ENCODE measurements at regions of chr3 and their contacts with region 1.

Region 1: GRCh38 chr3:149352556-149352955 is 19.1 kb upstream of the TM4SF18 start:
- DNase-seq: no peak
- ATAC-seq: peak; percentile 99
- H3K4me3 ChIP-seq: no peak overlapping the region
- H3K27ac ChIP-seq: no peak overlapping the region
- H3K4me1 ChIP-seq: no peaks in the 10 kb centered on the region
- H3K27me3 ChIP-seq: peaks cover 5 to 6% of the 10 kb centered on the region in 2 experiments
- CTCF ChIP-seq: peak; percentile 68 to 81 (median 80)
- EP300 ChIP-seq: no peak
- POLR2A ChIP-seq: no peak
- RAD21 ChIP-seq: peak; percentile 76

Region 2: GRCh38 chr3:149363053-149363452 is 10.5 kb after region 1 on chr3:
- CTCF ChIA-PET with region 1: interaction called, 11 read pairs
- POLR2A ChIA-PET with region 1: no interaction called
- RAD21 ChIA-PET with region 1: no interaction called
- SMC1A ChIA-PET with region 1: interaction called, 4 read pairs
- in situ Hi-C with region 1: no loop called
- intact Hi-C with region 1: no loop called
- DNase-seq: no peak
- ATAC-seq: no peak
- H3K4me3 ChIP-seq: no peak overlapping the region
- H3K27ac ChIP-seq: no peak overlapping the region
- H3K4me1 ChIP-seq: no peaks in the 10 kb centered on the region
- H3K27me3 ChIP-seq: no peaks in the 10 kb centered on the region; a peak in 1 of 4 replicates
- CTCF ChIP-seq: no peak
- EP300 ChIP-seq: no peak
- POLR2A ChIP-seq: no peak
- RAD21 ChIP-seq: no peak

Region 3: GRCh38 chr3:149378403-149379388 is 26.1 kb after region 1 on chr3:
- CTCF ChIA-PET with region 1: interaction called, 3 read pairs
- POLR2A ChIA-PET with region 1: no interaction called
- RAD21 ChIA-PET with region 1: no interaction called
- SMC1A ChIA-PET with region 1: interaction called, 3 read pairs
- in situ Hi-C with region 1: no loop called
- intact Hi-C with region 1: loop called (anchors 1 kb)
- DNase-seq: no peak
- ATAC-seq: no peak
- H3K4me3 ChIP-seq: no peak overlapping the region
- H3K27ac ChIP-seq: no peak overlapping the region
- H3K4me1 ChIP-seq: no peaks in the 10 kb centered on the region
- H3K27me3 ChIP-seq: no peaks in the 10 kb centered on the region
- CTCF ChIP-seq: no peak
- EP300 ChIP-seq: no peak
- POLR2A ChIP-seq: no peak
- RAD21 ChIP-seq: no peak

Region 4: DNA sequence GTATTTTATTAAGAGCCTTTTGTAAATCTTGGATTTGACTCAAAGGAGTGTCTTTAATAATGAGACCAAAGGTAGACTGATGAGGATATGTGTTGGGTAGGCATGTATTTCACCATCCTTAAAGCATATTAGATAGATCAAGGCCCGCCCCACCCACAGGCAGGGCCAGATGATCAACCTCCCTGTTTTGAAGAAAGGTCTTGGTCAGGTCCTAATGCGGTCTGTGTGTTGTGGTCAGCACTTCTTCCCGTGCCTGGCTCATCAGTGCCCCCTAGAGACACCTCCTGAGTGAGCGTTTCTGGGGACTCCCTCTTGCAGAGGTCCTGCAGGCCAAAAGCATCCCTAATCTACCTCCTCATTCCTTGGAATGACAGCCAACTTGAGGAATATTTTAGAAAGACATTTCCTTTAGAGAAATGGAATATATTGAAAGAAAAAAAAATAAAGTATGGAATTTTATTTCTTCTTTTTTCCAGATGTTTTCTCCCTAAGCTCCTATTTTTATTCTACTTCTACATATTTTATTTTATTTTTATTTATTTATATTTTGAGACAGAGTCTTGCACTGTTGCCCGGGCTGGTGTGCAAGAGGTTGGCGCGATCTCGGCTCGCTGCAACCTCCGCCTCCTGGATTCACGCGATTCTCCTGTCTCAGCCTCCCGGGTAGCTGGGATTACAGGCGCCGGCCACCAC is 127.9 kb after region 1 on chr3:
- CTCF ChIA-PET with region 1: interaction called, 58 read pairs
- POLR2A ChIA-PET with region 1: no interaction called
- RAD21 ChIA-PET with region 1: interaction called, 6 read pairs
- SMC1A ChIA-PET with region 1: interaction called, 15 read pairs
- in situ Hi-C with region 1: loop called (anchors 5 kb)
- intact Hi-C with region 1: loop called (anchors 1 kb)
- DNase-seq: peak; percentile 52
- ATAC-seq: peak; percentile 99
- H3K4me3 ChIP-seq: no peak overlapping the region
- H3K27ac ChIP-seq: no peak overlapping the region
- H3K4me1 ChIP-seq: no peaks in the 10 kb centered on the region
- H3K27me3 ChIP-seq: no peaks in the 10 kb centered on the region
- CTCF ChIP-seq: peak; percentile 86 to 95 (median 93)
- EP300 ChIP-seq: no peak
- POLR2A ChIP-seq: no peak
- RAD21 ChIP-seq: peak; percentile 97

Region 5: DNA sequence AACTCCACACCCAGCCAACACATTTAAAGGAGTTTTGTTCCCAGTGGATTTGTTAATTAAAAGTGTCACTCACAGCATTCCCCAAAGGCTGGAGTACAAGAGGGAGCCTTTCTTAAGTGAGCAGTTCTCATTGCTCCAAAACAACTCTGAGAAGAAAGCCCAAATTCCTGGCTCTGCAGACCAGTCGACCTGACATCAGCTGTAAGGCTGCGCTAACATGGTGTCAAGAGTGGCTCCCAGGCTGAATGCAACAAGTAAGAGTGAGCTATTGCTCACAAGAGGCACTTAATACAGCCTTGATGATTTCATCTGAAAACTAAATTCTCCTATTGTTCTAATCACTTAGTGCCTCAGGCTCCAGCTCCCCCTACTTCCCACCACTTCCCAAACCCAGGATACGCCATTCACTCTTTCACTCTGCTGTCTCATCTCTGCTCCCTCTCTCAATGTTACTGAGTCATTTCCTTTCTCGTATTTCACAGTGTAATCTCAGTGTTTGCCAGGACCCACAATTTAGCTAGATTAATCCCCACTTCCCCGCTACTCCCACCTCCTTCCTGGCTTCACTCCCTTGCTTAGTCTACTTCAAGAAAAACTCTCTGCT is 223.5 kb after region 1 on chr3:
- CTCF ChIA-PET with region 1: interaction called, 10 read pairs
- POLR2A ChIA-PET with region 1: no interaction called
- RAD21 ChIA-PET with region 1: no interaction called
- SMC1A ChIA-PET with region 1: no interaction called
- in situ Hi-C with region 1: no loop called
- intact Hi-C with region 1: no loop called
- DNase-seq: no peak
- ATAC-seq: peak; percentile 51
- H3K4me3 ChIP-seq: peak overlapping the region; percentile 10; the same call in 1 of the 2 replicates
- H3K27ac ChIP-seq: peak overlapping the region; percentile 70
- H3K4me1 ChIP-seq: peaks cover 59% of the 10 kb centered on the region
- H3K27me3 ChIP-seq: no peaks in the 10 kb centered on the region
- CTCF ChIP-seq: no peak
- EP300 ChIP-seq: 0 out of 4 replicates have a peak, but pooled peaks of 1 of the 2 experiments have one; percentile 35
- POLR2A ChIP-seq: no peak
- RAD21 ChIP-seq: no peak

Region 6: GRCh38 chr3:150000641-150001040 is 648.1 kb after region 1 on chr3:
- CTCF ChIA-PET with region 1: no interaction called
- POLR2A ChIA-PET with region 1: no interaction called
- RAD21 ChIA-PET with region 1: no interaction called
- SMC1A ChIA-PET with region 1: no interaction called
- in situ Hi-C with region 1: no loop called
- intact Hi-C with region 1: no loop called
- DNase-seq: no peak
- ATAC-seq: no peak
- H3K4me3 ChIP-seq: no peak overlapping the region
- H3K27ac ChIP-seq: no peak overlapping the region
- H3K4me1 ChIP-seq: no peaks in the 10 kb centered on the region
- H3K27me3 ChIP-seq: no peaks in the 10 kb centered on the region
- CTCF ChIP-seq: no peak
- EP300 ChIP-seq: no peak
- POLR2A ChIP-seq: no peak
- RAD21 ChIP-seq: no peak